ENCODE measurements at regions of chr12 and their contacts with region 1.

Region 1: DNA sequence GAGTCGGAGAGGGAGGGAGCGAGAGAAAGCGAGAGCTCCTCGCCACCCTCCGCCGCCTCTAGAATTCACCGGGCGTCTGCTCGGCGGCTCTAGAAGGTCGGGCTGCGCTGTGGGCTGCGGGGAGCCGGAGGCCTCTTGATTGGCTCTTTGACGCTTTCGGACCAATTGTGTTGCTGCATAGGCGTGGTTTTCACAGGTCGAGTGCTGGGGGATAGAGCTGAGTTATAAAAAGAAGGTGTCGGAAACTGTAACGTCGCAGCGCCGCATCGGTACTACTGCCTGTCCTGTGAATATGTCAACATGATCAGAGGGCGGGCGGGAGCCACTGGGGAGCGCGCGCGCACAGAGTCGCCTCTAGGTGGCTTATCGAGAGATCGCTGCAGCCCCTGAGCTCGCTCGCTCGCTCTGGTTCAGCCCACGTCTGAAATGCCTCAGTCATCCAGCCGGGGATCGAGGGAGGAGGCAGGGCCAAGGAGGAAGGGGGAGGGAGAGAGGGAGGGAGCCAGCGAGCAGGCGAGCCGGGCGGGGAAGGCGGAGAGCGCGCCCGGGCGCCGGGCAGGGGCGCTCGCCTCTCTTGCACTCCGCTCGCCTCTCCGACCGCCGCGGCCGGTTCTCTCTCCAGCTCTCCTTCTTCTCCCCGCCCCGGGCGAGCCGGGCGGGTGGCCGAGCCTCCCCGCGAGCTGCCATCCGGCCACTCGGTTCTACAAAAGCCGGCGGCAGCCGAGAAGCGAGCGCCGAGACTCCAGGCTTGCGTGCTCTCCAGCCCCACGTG is at the start of gene TBX3:
- DNase-seq: peak; percentile 91 to 96 (median 94)
- ATAC-seq: peak; percentile 93 to 95 (median 94)
- H3K4me3 ChIP-seq: peak within 1 kb of the TSS; percentile 56 to 89 (median 74)
- H3K27ac ChIP-seq: peak within 1 kb of the TSS; percentile 81 to 98 (median 90)
- H3K4me1 ChIP-seq: peaks cover 0 to 21% (median 10%) of the 10 kb centered on the region in 12 donors
- H3K27me3 ChIP-seq: peaks cover 11 to 74% (median 40%) of the 10 kb centered on the region in 9 donors
- CTCF ChIP-seq: peak; percentile 15 to 70 (median 51)
- POLR2A ChIP-seq: peak; percentile 55 to 98
- total RNA-seq, gene TBX3: 10.3 to 31.3 (median 16.2) TPM

Region 2: DNA sequence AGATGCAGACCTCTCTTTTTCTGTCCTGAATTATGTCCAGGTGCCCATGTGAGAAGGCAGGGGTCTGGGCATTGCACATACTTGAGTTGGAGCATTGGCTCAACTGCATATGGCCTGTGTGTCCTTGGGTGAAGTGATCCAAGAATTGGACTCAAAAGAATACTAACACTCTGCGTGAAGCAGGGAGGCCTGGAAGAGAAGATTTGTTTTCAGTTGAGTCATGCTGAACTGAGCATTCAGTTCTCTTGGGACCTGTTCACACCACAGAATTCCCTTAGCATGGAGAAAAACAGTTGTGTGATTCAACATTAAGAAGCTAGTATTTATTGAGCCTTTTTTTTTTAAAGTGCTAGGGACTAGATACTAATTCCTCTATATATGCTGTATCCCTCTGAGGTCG is 164.4 kb after region 1 on chr12:
- intact Hi-C with region 1: loop called in 1 of 10 experiments (anchors 5 kb)
- DNase-seq: no peak
- ATAC-seq: peak in 3 of 4 donors; percentile 20 to 64 (median 32)
- H3K4me3 ChIP-seq: no peak overlapping the region
- H3K27ac ChIP-seq: no peak overlapping the region
- H3K4me1 ChIP-seq: peaks cover 0 to 5% (median 0%) of the 10 kb centered on the region in 12 donors
- H3K27me3 ChIP-seq: no peaks in the 10 kb centered on the region
- CTCF ChIP-seq: no peak
- POLR2A ChIP-seq: no peak

Region 3: GRCh38 chr12:115135800-115136211 is 451.5 kb after region 1 on chr12:
- intact Hi-C with region 1: loop called in 1 of 10 experiments (anchors 5 kb)
- DNase-seq: peak; percentile 35 to 90 (median 74)
- ATAC-seq: peak; percentile 69 to 98 (median 96)
- H3K4me3 ChIP-seq: no peak overlapping the region
- H3K27ac ChIP-seq: peak overlapping the region in 3 of 12 donors; percentile 27 to 35 (median 30)
- H3K4me1 ChIP-seq: peaks cover 0 to 13% (median 0%) of the 10 kb centered on the region in 12 donors
- H3K27me3 ChIP-seq: no peaks in the 10 kb centered on the region
- CTCF ChIP-seq: no peak
- POLR2A ChIP-seq: no peak

Region 4: DNA sequence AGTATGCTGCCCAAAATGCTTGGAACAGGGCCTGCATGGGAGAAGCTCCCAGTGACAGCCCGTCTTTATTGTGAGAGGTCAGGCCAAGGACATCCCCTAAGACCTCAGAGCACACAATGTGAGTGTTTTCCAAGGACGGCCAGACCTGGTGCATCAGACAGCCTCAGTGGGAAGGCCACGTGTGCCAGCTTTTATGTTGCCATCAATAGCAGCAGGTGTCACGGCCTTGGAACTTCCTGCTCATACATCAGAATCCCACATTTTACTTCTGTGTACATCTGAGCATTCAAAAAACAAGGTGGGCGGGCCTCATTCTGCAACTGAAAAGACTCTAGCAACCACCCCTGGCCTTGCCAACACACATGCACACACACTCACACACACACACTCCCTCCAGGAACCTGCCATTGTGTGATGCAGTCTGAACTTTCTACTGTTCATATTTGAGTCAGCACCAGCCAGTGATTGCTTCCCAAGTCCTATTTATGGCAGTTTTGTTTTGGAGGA is 752.8 kb after region 1 on chr12:
- intact Hi-C with region 1: loop called in 2 of 10 experiments (anchors 5 kb)
- DNase-seq: peak in 4 of 5 donors; percentile 34 to 74 (median 67)
- ATAC-seq: peak in 3 of 4 donors; percentile 53 to 69 (median 64)
- H3K4me3 ChIP-seq: no peak overlapping the region
- H3K27ac ChIP-seq: peak overlapping the region in 10 of 12 donors; percentile 0 to 69 (median 40)
- H3K4me1 ChIP-seq: peaks cover 0 to 31% (median 10%) of the 10 kb centered on the region in 12 donors
- H3K27me3 ChIP-seq: no peaks in the 10 kb centered on the region
- CTCF ChIP-seq: no peak
- POLR2A ChIP-seq: no peak

Region 5: DNA sequence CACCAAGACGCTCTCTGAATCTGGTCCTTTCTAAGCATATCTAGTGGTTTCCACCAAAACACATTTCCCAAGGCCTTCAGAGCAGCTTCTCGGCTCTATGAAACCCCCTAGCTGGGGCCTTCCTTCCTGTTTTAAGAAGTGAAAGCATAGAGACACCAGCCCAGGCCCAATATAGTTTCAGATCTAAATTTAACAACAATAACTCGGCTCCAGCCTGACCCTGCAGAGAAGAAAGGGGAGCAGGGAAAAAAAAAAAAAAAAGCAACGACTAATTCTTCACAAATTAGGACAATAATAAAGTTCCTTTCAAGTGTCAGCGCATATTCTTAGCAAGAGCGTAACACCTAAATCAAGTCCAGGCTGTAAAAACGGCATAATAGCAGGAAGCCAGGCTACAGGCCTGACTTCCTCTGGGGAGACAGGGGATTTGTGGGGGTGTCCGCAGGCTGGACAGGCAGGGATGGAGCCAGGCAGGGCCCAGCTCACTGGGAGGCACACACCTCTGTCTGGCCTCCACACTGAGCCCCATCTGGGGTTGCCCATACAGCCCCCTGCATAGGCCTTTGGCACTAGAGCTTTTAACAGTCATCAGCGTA is 820.1 kb after region 1 on chr12:
- intact Hi-C with region 1: loop called in 3 of 10 experiments (anchors 5 to 10 kb)
- DNase-seq: peak in 4 of 5 donors; percentile 34 to 55 (median 46)
- ATAC-seq: peak; percentile 36 to 82 (median 64)
- H3K4me3 ChIP-seq: no peak overlapping the region
- H3K27ac ChIP-seq: peak overlapping the region in 11 of 12 donors; percentile 41 to 84 (median 71)
- H3K4me1 ChIP-seq: peaks cover 0 to 48% (median 25%) of the 10 kb centered on the region in 12 donors
- H3K27me3 ChIP-seq: no peaks in the 10 kb centered on the region
- CTCF ChIP-seq: peak in 1 of 12 donors; percentile 21
- POLR2A ChIP-seq: no peak

Region 6: DNA sequence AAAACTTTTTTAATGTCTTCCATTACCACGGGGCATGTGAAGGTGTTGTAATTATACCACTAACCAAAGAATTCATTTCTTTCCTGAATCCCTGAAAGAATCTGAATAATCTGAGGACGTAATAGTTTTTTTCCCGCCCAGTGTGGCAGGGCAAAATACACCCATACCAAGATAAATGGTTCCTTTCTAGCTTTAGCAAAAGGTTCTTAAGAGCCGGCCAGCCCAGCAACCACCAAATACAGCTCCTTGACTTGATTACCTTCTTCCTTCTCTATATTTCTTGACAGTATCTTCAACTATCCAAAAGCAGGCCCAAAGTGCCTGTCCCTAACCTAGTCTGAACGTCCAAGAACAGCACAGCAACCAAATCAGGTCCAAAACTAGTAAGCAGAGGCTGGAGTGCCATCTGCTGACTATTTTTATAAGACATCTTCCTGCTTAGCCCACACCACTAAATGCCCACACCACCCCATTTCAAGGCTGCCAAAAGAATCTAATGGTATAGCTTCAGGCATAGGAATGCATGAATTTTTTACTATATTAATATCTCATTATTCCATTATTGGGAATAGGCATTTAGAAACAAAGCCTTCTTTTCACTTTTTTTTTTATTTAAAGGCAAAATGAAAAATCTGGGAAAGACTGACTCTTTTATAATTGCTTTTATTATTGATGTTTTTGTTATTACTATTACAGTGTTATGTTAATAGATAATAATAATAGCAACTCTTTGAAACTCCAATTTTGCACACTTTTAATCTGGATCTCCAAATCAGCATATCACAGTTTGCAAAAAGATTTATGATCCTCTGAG is 1068.8 kb after region 1 on chr12:
- intact Hi-C with region 1: loop called in 2 of 10 experiments (anchors 5 kb)
- DNase-seq: peak in 4 of 5 donors; percentile 29 to 47 (median 36)
- ATAC-seq: peak; percentile 80 to 94 (median 88)
- H3K4me3 ChIP-seq: no peak overlapping the region
- H3K27ac ChIP-seq: no peak overlapping the region
- H3K4me1 ChIP-seq: peaks cover 0 to 16% (median 3%) of the 10 kb centered on the region in 12 donors
- H3K27me3 ChIP-seq: peaks cover 0 to 26% (median 11%) of the 10 kb centered on the region in 9 donors
- CTCF ChIP-seq: peak; percentile 40 to 79 (median 70)
- POLR2A ChIP-seq: no peak